ENCODE measurements at regions of chr5 and their contacts with region 1.

Region 1: DNA sequence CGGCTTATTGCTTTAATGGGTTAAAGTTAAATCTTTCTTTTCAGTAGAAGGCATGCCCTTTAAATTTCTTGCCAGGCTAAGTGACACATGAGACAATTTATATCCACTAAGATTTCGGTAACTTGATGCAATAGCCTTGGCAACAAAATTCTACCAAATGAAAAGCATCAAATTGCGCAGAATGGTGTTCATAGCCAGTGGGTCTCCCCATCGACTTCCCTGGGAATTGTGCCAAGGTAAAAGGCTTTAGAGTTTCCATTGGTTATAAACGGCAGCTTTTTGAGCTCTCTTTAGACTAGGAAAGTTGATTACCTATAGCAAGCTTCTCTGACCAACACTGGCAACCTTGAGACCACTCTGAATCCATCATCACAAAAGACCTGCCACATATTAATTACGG is 358.4 kb downstream of the ARRDC3 start:
- DNase-seq: no peak

Region 2: GRCh38 chr5:90983148-90983547 is 41.6 kb before region 1 on chr5:
- intact Hi-C with region 1: no loop called
- DNase-seq: no peak

Region 3: GRCh38 chr5:90994796-90995195 is 29.9 kb before region 1 on chr5:
- intact Hi-C with region 1: no loop called
- DNase-seq: no peak

Region 4: GRCh38 chr5:91469517-91470165 is 444.9 kb after region 1 on chr5:
- intact Hi-C with region 1: loop called in 1 of 2 experiments (anchors 5 kb)
- DNase-seq: no peak